A549 (cell line): ENCODE measurements at regions of chr1 and their contacts with region 1.

Region 1: GRCh38 chr1:155050560-155051341 is at the start of gene ADAM15:
- DNase-seq: peak; percentile 84 to 90
- ATAC-seq: peak; percentile 66 to 77
- H3K4me3 ChIP-seq: peak within 1 kb of the TSS; percentile 94
- H3K27ac ChIP-seq: peak within 1 kb of the TSS; percentile 93 to 94
- H3K4me1 ChIP-seq: peaks cover 22% of the 10 kb centered on the region
- CTCF ChIP-seq: peak; percentile 89
- EP300 ChIP-seq: no peak
- POLR2A ChIP-seq: peak; percentile 64
- RAD21 ChIP-seq: peak; percentile 54 to 60
- polyA plus RNA-seq, gene ADAM15: 25.6 and 33.6 TPM in 2 replicates

Region 2: GRCh38 chr1:155063550-155064110 is 12.9 kb after region 1 on chr1 and contains the start of gene EFNA4:
- CTCF ChIA-PET with region 1: interaction called, 319 read pairs
- POLR2A ChIA-PET with region 1: interaction called, 3 read pairs
- DNase-seq: peak; percentile 89 to 91
- ATAC-seq: peak; percentile 72 to 86
- H3K4me3 ChIP-seq: peak within 1 kb of the TSS; percentile 77
- H3K27ac ChIP-seq: peak within 1 kb of the TSS; percentile 81 to 91
- H3K4me1 ChIP-seq: peaks cover 23% of the 10 kb centered on the region
- CTCF ChIP-seq: no peak
- EP300 ChIP-seq: no peak
- POLR2A ChIP-seq: peak; percentile 77
- RAD21 ChIP-seq: no peak
- polyA plus RNA-seq, gene EFNA4: 3.1 and 4.9 TPM in 2 replicates

Region 3: DNA sequence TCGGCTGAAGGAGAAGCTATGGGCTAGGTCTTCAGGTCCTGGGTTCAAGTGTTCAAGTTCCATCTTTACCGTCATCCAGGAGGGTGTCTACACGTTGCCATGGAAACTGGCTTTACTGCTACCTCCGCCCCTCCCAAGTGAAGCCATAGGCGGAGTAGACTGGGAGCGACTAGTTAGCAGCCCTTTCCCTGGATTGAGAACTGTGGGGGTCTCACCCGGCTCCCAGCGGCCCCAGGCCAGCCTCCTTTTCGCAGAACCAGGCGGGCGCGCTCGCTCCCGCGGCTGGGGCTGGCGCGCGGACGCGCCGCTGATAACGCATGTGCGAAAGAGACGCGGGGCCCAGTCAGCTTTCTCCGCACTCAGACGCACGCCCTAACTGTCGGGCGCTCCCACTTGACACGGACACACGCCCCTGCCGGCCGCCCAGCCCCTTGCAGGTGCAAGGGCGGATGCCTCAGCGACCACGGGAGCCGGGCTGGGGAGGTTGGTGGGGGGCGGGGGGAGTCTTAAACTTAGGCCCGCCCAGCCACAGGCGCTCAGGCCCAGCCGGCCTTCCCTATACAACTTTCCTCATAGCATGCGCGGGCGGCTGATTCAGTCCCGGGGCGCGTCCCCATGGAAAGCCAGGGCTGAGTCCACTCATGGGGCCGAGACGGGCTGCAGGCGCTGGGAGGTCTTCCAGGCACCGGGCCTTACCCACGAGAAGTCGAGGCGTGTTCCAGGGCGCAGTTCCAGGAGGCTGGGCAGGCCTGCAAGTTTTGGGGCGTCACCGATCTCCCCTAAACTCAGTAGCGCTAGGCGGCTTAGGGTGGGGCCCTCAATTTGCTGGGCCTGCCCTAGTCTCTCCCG is 20.2 kb after region 1 on chr1:
- CTCF ChIA-PET with region 1: interaction called, 319 read pairs
- POLR2A ChIA-PET with region 1: interaction called, 5 read pairs
- DNase-seq: peak in 1 of 2 experiments; percentile 71
- ATAC-seq: peak; percentile 79 to 88
- H3K4me3 ChIP-seq: peak overlapping the region; percentile 34
- H3K27ac ChIP-seq: peak overlapping the region; percentile 51 to 63
- H3K4me1 ChIP-seq: 0 out of 3 replicates have a peak, but pooled peaks cover 12% of the 10 kb centered on the region
- CTCF ChIP-seq: no peak
- EP300 ChIP-seq: no peak
- POLR2A ChIP-seq: no peak
- RAD21 ChIP-seq: no peak

Region 4: DNA sequence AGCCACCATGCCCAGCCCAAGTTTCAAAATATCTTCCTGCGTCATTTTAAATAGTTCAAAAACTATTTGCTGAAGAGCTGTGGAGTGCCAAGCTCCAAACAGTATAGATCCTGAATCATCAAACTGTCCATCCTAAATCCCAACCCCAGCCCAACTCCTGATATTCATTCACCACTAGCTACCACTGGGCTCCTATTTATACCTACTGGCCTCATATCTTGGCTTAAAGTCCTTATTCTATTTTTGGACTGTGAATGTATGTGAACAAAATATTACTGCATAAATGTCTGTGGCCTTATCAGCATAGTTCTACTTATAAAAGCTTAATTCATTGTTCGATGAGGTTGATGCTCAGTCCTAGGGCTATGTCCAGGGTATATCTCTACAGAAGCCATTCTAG is 216.6 kb after region 1 on chr1:
- CTCF ChIA-PET with region 1: no interaction called
- POLR2A ChIA-PET with region 1: no interaction called
- DNase-seq: no peak
- ATAC-seq: no peak
- H3K4me3 ChIP-seq: no peak overlapping the region
- H3K27ac ChIP-seq: no peak overlapping the region
- H3K4me1 ChIP-seq: peaks cover 13% of the 10 kb centered on the region
- CTCF ChIP-seq: no peak
- EP300 ChIP-seq: no peak
- POLR2A ChIP-seq: no peak
- RAD21 ChIP-seq: no peak